A549 (cell line): ENCODE measurements at regions of chr5 and their contacts with region 1.

Region 1: DNA sequence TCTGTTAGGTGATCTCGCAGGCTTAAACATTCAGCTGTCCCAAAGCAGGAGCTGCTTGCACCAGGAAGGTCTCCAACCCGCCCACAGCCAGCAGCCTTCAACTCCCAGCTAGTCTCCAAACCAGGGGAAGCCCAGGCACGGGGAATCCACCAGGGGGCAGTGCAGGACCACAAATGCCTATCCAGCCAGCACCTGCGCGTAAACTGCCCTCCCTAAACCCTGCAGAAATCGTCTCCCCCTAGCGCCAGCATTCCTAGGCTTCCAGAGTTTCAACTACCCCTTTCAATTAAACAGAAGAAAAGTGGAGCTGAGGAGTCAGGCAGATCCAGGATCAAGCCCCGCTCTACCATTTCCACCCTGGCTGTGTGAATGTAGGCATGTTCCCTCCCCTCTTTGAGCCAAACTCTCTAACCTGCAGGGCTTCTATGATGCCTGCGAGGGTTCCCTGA is 72.0 kb downstream of the HRH2 start:
- DNase-seq: peak; percentile 93 to 96
- ATAC-seq: peak; percentile 95 to 98
- H3K4me3 ChIP-seq: no peak overlapping the region
- H3K27ac ChIP-seq: peak overlapping the region; percentile 77 to 78
- H3K4me1 ChIP-seq: peaks cover 24% of the 10 kb centered on the region
- CTCF ChIP-seq: peak; percentile 99
- EP300 ChIP-seq: no peak
- POLR2A ChIP-seq: no peak
- RAD21 ChIP-seq: peak; percentile 100

Region 2: DNA sequence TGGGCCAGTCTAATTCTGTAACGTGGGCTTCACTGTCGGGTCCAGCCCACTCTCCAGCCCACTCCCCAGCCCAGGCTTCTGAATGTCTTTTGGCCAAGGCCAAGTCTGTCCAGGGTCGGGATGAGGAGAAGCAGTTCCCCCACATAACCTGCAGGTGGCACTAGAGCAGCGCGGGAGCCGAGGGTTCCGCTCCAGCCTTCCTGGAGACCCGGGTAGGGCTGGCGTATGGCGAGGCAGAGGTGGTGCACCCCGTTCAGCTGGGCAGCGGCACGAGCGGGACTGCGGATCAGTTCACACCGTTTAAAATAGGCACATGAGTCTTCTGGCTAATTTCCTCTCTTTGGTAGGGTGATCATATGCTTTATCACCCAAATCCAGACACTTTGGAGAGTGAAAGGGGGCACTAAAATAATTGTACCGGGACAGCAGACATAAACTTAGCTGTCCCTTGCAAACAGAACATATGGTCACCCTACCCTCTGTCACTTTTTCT is 819.6 kb before region 1 on chr5:
- CTCF ChIA-PET with region 1: interaction called, 13 read pairs
- POLR2A ChIA-PET with region 1: no interaction called
- DNase-seq: peak; percentile 58 to 82
- ATAC-seq: peak; percentile 98 to 100
- H3K4me3 ChIP-seq: 0 out of 3 replicates have a peak overlapping the region, but pooled peaks have one; percentile 9
- H3K27ac ChIP-seq: no peak overlapping the region
- H3K4me1 ChIP-seq: no peaks in the 10 kb centered on the region
- CTCF ChIP-seq: peak; percentile 85
- EP300 ChIP-seq: no peak
- POLR2A ChIP-seq: no peak
- RAD21 ChIP-seq: peak; percentile 91

Region 3: GRCh38 chr5:175378444-175379028 is 351.3 kb before region 1 on chr5:
- CTCF ChIA-PET with region 1: no interaction called
- POLR2A ChIA-PET with region 1: no interaction called
- DNase-seq: peak; percentile 84 to 97
- ATAC-seq: peak; percentile 95 to 98
- H3K4me3 ChIP-seq: no peak overlapping the region
- H3K27ac ChIP-seq: peak overlapping the region; percentile 83 to 87
- H3K4me1 ChIP-seq: peaks cover 37% of the 10 kb centered on the region
- CTCF ChIP-seq: no peak
- EP300 ChIP-seq: peak; percentile 97 to 98
- POLR2A ChIP-seq: no peak
- RAD21 ChIP-seq: peak; percentile 34 to 72

Region 4: GRCh38 chr5:175718401-175719108 is 11.3 kb before region 1 on chr5:
- CTCF ChIA-PET with region 1: interaction called, 60 read pairs
- POLR2A ChIA-PET with region 1: no interaction called
- DNase-seq: peak in 1 of 2 experiments; percentile 42
- ATAC-seq: peak in 1 of 2 experiments; percentile 55; a peak in 1 of 6 replicates
- H3K4me3 ChIP-seq: no peak overlapping the region
- H3K27ac ChIP-seq: no peak overlapping the region
- H3K4me1 ChIP-seq: no peaks in the 10 kb centered on the region
- CTCF ChIP-seq: peak; percentile 67
- EP300 ChIP-seq: no peak
- POLR2A ChIP-seq: no peak
- RAD21 ChIP-seq: peak; percentile 59 to 66; a peak in 4 of 5 replicates

Region 5: DNA sequence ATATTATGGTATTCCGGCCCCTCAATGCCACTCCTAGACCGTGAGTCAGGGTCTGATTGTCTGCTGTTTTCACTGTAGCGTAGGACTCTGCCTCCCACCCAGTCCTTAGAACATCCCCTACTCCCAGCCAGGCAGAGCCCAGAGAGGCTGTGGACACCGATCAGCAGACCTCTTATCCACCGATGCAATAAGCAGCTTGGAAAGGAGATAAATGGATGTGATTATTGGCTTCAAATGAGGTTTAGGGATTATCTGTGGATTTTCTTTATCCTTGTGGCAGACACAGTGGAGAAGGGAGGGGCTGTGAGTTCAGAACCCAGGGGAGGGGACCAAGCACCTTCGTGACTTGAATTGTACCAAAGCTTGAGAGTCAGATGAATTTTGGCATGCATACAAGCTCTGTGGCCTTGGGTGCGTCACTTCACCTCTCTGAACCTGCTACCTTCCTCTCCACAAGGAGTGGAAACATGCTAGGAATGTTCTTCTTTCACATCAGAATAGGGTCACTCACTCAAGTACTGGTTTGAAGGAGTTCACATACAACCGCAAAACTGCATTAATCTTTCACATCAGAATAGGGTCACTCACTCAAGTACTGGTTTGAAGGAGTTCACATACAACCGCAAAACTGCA is 58.4 kb after region 1 on chr5:
- CTCF ChIA-PET with region 1: interaction called, 14 read pairs
- POLR2A ChIA-PET with region 1: no interaction called
- DNase-seq: no peak
- ATAC-seq: no peak
- H3K4me3 ChIP-seq: no peak overlapping the region
- H3K27ac ChIP-seq: no peak overlapping the region
- H3K4me1 ChIP-seq: no peaks in the 10 kb centered on the region
- CTCF ChIP-seq: no peak
- EP300 ChIP-seq: no peak
- POLR2A ChIP-seq: no peak
- RAD21 ChIP-seq: no peak

Region 6: DNA sequence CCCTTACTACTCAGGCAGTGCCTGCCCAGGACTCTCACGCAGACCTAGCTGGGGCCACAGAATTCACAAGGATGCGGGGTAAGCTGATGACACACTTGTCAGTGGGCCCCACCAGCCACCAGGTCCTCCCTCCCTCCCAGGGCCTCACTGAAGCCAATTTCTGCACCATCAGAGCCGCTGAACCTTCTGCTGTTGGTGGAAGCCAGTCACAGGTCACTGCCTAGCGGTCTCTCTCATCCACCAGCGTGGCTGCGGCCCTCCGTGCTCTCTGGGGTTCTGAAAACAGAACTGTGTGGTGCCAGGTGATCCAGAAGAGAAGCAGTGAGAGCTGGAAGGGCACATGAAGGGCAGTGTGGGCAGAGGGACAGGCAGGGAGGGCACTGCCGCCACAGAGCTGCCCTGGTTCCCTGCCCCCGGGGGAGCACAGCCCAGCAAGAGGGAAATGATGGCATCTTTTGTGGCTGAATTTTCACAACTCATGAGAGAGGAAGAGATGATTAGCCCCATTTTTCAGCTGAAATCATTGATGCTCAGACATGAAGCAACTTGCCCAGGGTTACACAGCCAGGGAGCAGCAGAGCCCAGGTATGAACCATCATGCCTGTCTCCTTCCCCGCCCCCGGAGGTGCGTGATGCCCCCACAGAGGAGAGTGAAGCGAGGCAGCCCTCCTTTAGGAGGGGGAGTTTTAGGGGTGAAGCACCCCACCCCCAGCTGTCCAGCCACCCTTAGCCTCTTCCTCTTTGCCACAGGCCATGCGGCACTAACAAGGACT is 100.1 kb after region 1 on chr5:
- CTCF ChIA-PET with region 1: interaction called, 24 read pairs
- POLR2A ChIA-PET with region 1: no interaction called
- DNase-seq: no peak
- ATAC-seq: 0 out of 6 replicates have a peak, but pooled peaks of 1 of the 2 experiments have one; percentile 8
- H3K4me3 ChIP-seq: no peak overlapping the region
- H3K27ac ChIP-seq: peak overlapping the region; percentile 51 to 80
- H3K4me1 ChIP-seq: peaks cover 48% of the 10 kb centered on the region
- CTCF ChIP-seq: no peak
- EP300 ChIP-seq: no peak
- POLR2A ChIP-seq: no peak
- RAD21 ChIP-seq: no peak

Region 7: DNA sequence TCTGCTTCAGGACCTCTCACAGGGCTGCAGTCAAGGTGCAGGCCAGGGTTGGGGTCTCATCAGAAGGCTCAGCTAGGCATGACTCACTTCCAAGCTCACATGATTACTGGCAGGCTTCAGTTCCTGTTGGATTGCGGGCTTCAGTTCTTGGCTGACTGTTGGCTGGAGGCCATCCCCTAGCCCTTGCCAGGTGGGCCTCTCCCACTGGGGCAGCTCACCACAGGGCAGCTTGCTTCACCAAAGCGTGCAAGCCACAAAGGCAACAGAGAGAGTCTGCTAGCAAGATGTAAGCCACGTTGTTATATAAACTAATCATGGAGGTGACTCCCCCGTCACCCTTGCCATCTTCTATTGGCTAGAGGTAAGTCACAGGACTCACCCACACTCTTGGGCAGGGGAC is 156.0 kb after region 1 on chr5:
- CTCF ChIA-PET with region 1: interaction called, 51 read pairs
- POLR2A ChIA-PET with region 1: no interaction called
- DNase-seq: no peak
- ATAC-seq: peak in 1 of 2 experiments; percentile 2; a peak in 2 of 6 replicates
- H3K4me3 ChIP-seq: no peak overlapping the region
- H3K27ac ChIP-seq: peak overlapping the region; percentile 46 to 82; a peak in 5 of 6 replicates
- H3K4me1 ChIP-seq: peaks cover 75% of the 10 kb centered on the region
- CTCF ChIP-seq: no peak
- EP300 ChIP-seq: no peak
- POLR2A ChIP-seq: no peak
- RAD21 ChIP-seq: no peak